Transverse colon (tissue), 4 donors: ENCODE measurements at regions of chr6 and their contacts with region 1.

Region 1: GRCh38 chr6:3456755-3457466 is at the start of gene SLC22A23:
- DNase-seq: peak; percentile 85
- H3K4me3 ChIP-seq: peak within 1 kb of the TSS; percentile 51 to 83 (median 73)
- H3K27ac ChIP-seq: peak within 1 kb of the TSS; percentile 81 to 88 (median 88)
- H3K4me1 ChIP-seq: peaks cover 0 to 28% (median 15%) of the 10 kb centered on the region in 4 donors
- H3K27me3 ChIP-seq: peaks cover 5% of the 10 kb centered on the region
- CTCF ChIP-seq: peak; percentile 20 to 90 (median 71)
- EP300 ChIP-seq: no peak
- POLR2A ChIP-seq: peak; percentile 11
- total RNA-seq, gene SLC22A23: 96.1 to 161 (median 117) TPM

Region 2: DNA sequence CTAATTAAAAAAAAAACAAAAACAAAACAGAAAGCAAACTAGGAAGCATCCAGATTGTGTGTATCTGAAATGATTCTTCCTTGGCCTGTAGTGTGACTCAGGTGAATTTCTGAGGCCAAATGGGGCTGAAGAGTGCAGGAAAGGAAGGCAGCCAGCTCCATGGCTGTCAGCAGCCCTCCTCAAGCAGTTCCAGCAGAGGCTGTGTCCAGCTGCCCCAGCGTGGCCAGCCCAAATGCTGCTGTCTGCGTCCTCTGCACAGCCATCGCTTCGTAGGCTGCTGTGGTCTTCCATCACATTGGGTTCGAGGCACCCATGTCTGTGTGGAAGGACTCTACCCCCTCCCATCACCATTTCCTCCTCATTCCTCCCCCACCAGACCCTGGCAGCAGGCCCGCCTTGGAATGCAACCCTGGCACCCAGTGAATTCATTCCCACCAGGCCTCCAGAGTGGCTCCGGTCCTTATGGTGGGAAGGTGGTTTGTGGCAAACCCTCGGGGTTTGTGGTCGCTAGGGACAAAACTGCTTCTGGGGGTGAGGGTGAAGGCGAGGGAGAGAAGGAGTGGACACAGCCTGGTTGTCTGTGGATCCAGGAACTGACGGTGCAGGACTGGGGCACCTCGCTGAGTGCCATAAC is 787.7 kb before region 1 on chr6:
- in situ Hi-C with region 1: no loop called
- intact Hi-C with region 1: no loop called
- DNase-seq: no peak
- H3K4me3 ChIP-seq: no peak overlapping the region
- H3K27ac ChIP-seq: no peak overlapping the region
- H3K4me1 ChIP-seq: no peaks in the 10 kb centered on the region
- H3K27me3 ChIP-seq: no peaks in the 10 kb centered on the region
- CTCF ChIP-seq: no peak
- EP300 ChIP-seq: no peak
- POLR2A ChIP-seq: no peak

Region 3: GRCh38 chr6:3356056-3356761 is 100.7 kb before region 1 on chr6:
- in situ Hi-C with region 1: no loop called
- intact Hi-C with region 1: loop called (anchors 10 kb)
- DNase-seq: peak; percentile 77
- H3K4me3 ChIP-seq: peak overlapping the region in 3 of 4 donors; percentile 2 to 39 (median 17)
- H3K27ac ChIP-seq: peak overlapping the region; percentile 92 to 95 (median 94)
- H3K4me1 ChIP-seq: peaks cover 22 to 53% (median 35%) of the 10 kb centered on the region in 4 donors
- H3K27me3 ChIP-seq: no peaks in the 10 kb centered on the region
- CTCF ChIP-seq: no peak
- EP300 ChIP-seq: no peak
- POLR2A ChIP-seq: no peak